ENCODE measurements at regions of chr14 and their contacts with region 1.

Region 1: DNA sequence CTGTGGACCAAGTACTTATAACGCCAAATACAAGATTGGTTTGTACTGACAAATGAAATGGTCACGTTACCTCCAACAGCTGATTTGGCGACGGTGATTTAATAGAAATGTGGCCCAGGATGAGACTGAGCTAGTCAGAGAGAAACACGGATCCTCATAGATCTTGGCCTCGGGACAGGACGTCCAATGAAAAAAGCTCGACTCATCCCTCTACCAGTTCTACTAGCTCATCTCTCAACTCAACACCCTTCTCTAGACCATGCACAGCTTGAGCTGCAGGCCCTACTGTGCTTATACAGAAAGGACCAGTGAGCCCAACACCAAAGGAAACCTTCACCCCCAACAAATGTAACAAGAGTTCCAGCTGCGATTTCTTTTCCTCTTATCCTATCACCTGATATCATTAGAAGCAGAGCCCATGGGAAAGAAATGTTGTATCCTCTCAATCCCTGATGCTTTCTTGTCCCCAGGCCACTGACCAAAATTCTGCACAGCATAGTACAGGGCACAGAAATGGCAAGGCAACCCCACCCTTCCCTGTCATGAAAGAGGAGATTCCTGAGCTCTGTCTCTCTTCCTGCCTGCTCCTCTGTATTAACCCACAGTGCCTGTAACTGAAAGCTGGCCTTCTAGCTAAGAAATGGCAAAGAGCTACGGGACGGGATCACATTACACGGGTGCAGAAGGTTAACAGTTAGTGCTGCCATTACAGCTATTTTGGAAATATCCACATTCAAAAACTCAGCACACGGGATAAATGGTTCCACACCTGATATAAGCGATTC is 39.2 kb downstream of the DICER1 start:
- DNase-seq: no peak
- ATAC-seq: no peak

Region 2: DNA sequence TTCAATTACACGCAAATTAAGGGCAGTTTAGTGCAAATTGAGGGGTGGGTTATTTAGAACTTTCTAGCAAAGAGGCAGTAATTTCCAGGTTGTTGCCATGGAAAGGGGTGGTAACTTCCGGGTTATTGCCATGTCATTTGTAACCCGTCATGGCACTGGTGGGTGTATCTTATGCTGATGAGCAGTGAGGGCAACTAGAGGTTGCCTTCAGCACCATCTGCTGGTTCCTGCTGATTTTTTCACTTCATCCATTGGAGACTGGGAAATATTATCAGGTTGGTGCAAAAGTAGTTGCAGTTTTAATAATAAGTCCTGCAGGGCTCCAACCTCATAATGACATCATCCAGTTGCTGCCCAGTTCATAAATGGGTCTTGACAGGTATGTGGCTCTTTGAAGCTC is 581.3 kb before region 1 on chr14:
- intact Hi-C with region 1: no loop called
- DNase-seq: no peak
- ATAC-seq: no peak

Region 3: DNA sequence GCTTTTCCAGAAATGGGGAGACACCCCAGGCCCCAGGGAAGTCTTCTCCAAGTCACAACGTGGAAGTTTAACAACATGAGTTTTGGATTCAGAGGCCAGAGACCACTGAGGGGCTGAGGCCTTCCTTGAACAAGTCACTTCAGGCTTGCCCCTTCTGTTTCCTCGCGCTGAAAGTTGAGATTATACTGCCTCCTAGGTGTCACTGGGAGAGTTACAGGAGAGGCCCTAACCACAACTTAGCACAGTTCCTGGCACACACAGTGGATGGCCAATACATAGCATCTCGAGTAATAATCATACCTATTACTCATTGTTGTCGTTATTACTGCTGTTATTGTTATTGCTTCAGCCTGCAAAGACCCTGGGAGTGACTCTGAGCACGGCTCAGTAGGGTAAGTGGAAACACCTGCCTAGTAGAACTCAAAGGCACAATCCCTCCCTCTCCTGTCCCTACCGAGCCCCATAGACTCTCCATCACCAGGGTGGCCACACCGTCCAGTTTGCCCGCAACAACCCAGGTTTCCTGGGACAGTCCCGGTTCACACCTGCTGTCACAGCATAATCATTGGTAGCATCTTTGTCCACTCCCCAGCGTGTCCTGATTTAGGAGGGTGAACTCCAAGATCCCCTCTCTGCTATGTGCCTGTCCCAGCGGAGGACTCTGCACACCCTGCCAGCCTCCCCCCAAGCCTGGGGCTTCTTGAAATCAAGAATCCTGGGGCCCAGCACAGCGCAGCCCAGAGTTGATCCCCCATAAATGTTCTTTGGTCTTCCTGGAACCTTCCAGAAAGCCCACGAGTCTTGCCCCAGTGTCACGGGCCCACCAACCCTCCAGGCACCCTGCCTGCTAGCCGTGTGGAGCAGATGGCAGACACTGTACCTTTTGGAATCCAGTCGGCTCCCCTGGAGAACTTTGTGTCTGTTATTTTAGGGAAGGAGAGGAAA is 313.3 kb after region 1 on chr14:
- intact Hi-C with region 1: loop called (anchors 10 kb)
- DNase-seq: no peak
- ATAC-seq: peak; percentile 64

Region 4: GRCh38 chr14:95979339-95980042 is 861.4 kb after region 1 on chr14:
- intact Hi-C with region 1: no loop called
- DNase-seq: no peak
- ATAC-seq: no peak